Sciatic nerve (tissue), 2 donors: ENCODE measurements at regions of chr12 and their contacts with region 1.

Region 1: DNA sequence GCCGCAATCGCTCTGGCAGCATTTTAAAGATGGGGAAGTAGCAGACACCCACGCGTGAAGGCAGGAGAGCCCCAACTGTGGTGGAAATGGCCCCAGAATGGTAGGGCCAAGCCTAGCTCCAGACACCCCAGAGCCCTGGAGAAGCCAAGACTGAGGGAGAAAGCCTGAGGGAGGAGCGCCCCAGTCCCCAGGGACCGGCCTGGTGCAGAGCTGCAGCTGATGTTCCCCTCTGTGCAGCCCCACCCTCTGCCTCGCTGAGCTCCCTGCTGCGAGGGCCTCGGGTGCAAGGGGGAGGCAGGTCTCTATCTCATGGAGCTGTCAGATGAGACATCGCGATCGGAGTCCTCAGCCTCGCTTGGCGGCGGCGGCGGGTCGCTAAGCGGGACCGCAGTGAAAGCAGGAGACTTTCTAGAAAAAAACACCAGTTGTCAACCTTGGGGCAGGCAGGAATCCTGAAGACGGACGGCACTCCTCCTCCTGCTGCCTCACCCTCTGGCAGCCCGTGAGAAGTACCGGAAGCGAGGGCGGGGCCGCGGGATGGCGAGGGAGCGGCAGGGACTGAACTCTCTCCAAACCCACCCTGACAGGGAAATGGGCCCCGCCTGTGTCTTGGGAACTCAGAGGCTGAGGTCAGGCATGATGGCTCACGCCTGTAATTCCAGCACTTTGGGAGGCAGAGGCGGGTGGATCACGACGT is 6.0 kb downstream of the GAPDH start:
- DNase-seq: peak; percentile 91
- ATAC-seq: peak; percentile 92

Region 2: DNA sequence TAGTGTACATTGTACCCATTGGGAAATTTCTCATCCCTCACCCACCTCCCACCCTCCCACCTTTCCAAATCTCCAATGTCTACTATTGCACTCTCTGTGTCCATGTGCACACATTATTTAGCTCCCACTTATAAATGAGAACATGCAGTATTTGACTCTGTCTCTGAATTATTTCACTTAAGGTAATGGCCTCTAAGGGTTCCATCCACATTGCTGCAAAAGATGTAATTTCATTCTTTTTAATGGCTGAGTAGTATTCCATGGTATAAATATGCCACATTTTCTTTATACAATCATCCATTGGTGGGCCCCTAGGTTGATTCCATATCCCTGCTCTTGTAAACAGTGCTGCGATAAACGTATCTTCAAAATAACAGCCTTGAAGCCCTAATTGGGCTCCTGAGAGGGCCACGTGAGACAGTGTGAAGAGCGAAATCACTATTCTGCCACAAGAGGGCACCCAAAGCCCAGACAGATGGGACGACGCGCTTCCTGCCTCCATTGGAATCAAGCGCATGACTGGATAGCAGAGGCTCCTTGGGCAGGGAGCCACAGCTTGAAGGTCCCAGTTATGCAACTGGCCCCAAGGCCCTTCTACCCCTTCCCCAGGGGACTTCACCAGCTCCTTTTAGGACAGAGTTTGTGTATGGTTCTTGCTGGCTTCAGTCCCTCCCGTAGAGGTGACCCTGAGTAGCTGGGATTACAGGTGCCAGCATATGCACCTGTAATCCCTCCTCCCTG is 116.9 kb before region 1 on chr12:
- intact Hi-C with region 1: loop called (anchors 10 kb)
- DNase-seq: peak; percentile 89
- ATAC-seq: peak; percentile 95

Region 3: DNA sequence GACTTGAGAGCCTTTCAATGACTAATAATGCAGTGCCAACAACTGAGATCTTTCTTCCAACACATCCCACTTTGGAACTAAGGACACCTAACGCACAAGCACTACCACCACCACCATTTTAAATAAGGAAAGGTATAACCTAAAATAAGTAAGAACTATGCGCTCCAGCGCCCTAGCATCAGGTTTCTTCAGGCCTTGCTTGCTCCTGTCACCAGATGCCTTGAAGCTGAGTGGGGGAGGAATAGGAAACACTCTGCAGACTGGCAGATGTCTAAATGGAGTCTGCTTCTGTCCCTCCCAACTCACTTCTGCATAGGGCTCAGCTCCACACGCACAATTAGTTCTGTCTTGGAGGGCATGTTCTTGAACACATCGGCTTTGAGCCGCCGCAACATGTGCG is 51.8 kb after region 1 on chr12:
- intact Hi-C with region 1: no loop called
- DNase-seq: no peak
- ATAC-seq: no peak